ENCODE measurements at regions of chr3 and their contacts with region 1.

Region 1: GRCh38 chr3:159711560-159712333 is 276.9 kb upstream of the IL12A start:
- DNase-seq: peak; percentile 77

Region 2: GRCh38 chr3:159732172-159733111 is 20.7 kb after region 1 on chr3:
- intact Hi-C with region 1: loop called (anchors 2 kb)
- DNase-seq: no peak

Region 3: GRCh38 chr3:159796744-159797143 is 85.0 kb after region 1 on chr3:
- intact Hi-C with region 1: loop called (anchors 5 kb)
- DNase-seq: no peak

Region 4: DNA sequence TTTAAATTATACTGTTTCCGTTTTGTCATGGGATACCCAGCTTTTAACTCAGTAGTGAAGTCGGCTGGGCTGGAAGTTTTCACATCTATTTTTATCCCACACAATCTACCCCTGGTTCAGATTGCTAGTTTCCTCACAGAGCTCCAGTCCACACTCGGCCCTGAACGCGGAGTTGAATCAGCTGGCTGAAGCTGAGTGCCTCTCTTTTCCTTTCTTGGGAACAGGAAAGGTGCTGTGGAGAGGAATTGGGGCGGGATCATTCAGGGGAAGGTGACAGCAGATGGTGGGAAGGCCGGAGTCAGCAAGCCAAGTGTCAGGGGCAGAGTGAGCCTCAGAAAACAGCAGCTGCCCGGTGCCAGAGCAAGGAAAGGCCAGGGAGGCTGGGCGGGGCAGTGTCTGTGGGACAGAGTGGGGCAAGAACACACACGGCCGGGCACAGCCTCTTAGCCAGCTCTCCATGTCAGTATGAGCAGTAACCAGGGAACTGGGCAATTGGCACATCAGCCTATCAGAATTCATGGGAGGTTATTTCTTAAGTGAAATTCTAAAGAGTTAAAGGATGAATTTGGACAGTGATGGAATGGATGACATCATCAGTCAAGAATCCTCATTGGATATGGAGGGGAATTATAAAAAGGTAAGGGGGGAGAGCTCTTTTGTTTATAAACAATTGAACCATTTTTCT is 141.2 kb after region 1 on chr3:
- intact Hi-C with region 1: no loop called
- DNase-seq: peak; percentile 91

Region 5: DNA sequence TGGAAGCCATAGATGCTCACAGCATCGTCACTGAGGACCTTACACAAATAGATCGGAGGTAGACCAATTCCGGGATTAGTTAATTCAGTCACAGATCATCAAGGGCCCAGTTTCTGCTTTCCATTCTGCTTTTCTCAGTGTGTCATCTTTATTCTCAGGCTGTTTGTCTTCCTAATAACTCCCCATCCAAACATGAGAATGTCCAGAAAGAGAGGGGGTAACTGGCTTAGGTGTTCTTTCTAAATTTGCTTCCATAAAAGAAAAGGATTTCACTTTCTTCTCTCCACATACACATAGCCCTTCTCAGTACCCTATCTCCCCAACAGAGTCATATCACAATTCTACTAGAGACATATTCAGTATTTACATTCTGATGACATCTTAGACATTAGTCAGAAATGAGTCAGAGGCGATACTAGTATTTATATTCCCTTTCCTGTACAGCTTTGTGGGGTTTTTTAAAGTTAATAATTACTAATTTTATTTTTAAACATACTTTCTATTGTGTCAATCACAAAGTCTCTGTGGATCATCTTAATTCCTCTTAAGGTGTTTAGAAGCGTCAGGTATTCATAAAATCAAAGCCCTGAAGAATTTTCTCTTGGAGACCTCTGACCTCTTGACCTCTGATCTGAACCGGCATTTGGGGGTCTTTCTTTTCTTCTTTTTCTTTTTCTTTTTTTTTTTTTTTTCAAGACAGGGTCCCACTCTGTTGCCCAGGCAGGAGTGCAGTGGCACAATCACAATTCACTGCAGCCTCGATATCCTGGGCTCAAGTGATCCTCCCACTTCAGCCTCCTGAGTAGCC is 252.6 kb after region 1 on chr3:
- intact Hi-C with region 1: no loop called
- DNase-seq: no peak